ENCODE measurements at regions of chr14 and their contacts with region 1.

Region 1: DNA sequence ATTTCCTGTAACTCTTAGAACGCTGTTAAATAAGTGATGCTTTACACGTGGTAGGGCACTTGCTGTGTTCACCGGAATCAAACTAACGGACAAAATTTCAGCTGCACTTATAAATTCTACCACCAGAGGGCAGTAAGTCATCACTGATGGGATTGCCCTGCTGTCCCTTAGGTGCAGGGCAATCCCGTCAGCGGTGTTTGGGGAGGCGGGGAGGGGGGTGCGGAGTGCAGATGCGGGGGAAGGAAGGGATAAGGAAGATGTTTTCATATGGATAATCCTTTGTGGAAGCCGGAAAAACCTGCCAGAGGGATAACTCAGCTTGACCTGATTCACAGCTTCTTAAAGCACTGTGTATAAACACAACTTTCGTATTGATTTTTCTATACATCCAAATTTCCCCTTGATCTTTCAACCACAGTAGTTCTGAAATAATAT is 21.7 kb upstream of the SLC10A1 start:
- DNase-seq: peak; percentile 70 to 82 (median 75)
- H3K4me3 ChIP-seq: no peak overlapping the region
- H3K27ac ChIP-seq: no peak overlapping the region
- H3K4me1 ChIP-seq: peaks cover 0 to 2% (median 0%) of the 10 kb centered on the region in 4 experiments
- H3K27me3 ChIP-seq: peaks cover 0 to 17% (median 2%) of the 10 kb centered on the region in 5 experiments

Region 2: DNA sequence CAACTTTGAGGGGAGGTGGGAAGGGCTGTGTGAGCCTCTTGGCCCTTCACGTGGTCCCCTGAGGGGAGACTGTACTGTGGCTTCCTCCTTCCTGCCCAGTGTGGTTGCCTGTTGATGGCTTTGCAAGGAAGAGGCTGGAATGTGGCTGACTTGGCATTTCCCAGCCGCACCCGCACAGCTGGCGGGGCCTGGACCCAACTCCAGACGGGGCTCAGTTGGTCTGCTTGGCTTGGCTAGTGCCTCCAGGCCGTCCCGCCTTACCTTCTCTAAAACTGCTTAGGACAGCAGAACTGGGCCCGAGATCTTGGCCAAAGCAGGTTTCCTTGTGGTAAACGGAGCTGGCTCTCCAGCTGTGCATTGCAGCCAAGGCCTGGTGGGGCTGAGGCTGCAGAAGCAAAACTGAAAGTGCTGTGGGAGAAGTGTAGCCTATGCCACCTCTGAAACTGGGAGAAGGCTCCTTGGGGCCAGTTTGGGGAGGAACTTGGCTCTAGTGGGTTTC is 200.0 kb after region 1 on chr14:
- CTCF ChIA-PET with region 1: interaction called, 12 read pairs
- POLR2A ChIA-PET with region 1: no interaction called
- DNase-seq: peak; percentile 45 to 83 (median 77)
- H3K4me3 ChIP-seq: peak overlapping the region in 6 of 7 experiments; percentile 8 to 73 (median 44)
- H3K27ac ChIP-seq: no peak overlapping the region
- H3K4me1 ChIP-seq: peaks cover 0 to 46% (median 38%) of the 10 kb centered on the region in 4 experiments
- H3K27me3 ChIP-seq: no peaks in the 10 kb centered on the region

Measured in common myeloid progenitor, CD34-positive (primary cell).